ENCODE measurements at regions of chr16 and their contacts with region 1.

Region 1: DNA sequence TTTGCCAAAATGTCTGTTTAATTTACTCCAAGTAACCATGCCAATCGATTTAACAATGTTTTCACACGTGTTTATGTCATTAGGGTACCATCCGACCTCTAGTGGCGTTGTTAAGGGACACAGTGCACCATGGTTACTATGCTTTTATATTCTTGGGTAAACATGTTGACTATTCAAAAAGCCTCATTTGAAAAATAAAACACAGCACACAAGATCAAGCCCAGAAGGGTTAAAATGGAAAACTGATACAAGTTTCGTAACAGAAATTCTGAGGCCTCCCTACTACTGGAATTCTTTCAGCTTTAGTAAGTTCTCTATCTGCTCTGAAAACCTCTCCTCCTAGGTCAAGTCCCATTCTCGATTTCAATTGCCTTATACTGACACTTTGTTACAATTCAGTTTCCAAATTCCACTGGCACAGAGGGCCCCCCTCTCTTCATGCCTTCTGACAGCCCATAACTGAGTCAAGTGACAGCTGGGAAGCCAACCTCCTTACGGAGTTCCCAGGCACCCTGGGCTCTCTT is 2.1 kb downstream of the CFAP20 start:
- DNase-seq: peak; percentile 80 to 94 (median 91)
- H3K4me3 ChIP-seq: peak overlapping the region in 5 of 7 experiments; percentile 81 to 98 (median 88)
- H3K27ac ChIP-seq: peak overlapping the region; percentile 77 to 87
- H3K4me1 ChIP-seq: peaks cover 18 to 45% (median 36%) of the 10 kb centered on the region in 4 experiments
- H3K27me3 ChIP-seq: no peaks in the 10 kb centered on the region

Region 2: DNA sequence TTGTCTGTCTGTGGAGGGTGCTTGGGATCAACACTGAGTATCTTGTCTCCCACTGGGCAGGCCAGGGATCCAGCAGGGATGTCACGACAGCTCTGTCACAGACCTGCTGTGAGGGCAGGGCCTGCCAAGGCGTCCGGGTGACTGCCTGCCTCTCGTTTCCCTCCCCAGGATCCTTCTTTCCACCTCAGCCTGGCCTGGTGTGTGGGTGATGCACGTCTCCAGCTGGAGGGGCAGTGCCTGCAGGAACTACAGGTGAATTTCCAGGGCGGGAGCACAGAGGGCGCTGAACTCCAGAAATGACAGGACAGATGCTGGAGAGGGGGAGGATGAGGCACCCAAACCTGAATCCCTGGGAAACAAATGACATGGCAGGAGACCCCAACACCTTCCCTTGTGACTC is 108.3 kb before region 1 on chr16:
- CTCF ChIA-PET with region 1: interaction called, 45 read pairs
- POLR2A ChIA-PET with region 1: no interaction called
- DNase-seq: no peak
- H3K4me3 ChIP-seq: no peak overlapping the region
- H3K27ac ChIP-seq: no peak overlapping the region
- H3K4me1 ChIP-seq: peaks cover 0 to 8% (median 3%) of the 10 kb centered on the region in 4 experiments
- H3K27me3 ChIP-seq: peaks cover 0 to 4% (median 0%) of the 10 kb centered on the region in 5 experiments

Region 3: GRCh38 chr16:58025351-58026138 is 101.5 kb before region 1 on chr16 and contains the start of gene MMP15:
- CTCF ChIA-PET with region 1: interaction called, 40 read pairs
- POLR2A ChIA-PET with region 1: interaction called, 3 read pairs
- DNase-seq: peak; percentile 38 to 62 (median 49)
- H3K4me3 ChIP-seq: peak within 1 kb of the TSS; percentile 47 to 80 (median 71)
- H3K27ac ChIP-seq: no peak within 1 kb of the TSS
- H3K4me1 ChIP-seq: peaks cover 0 to 43% (median 34%) of the 10 kb centered on the region in 4 experiments
- H3K27me3 ChIP-seq: peaks cover 0 to 41% (median 12%) of the 10 kb centered on the region in 5 experiments

Region 4: DNA sequence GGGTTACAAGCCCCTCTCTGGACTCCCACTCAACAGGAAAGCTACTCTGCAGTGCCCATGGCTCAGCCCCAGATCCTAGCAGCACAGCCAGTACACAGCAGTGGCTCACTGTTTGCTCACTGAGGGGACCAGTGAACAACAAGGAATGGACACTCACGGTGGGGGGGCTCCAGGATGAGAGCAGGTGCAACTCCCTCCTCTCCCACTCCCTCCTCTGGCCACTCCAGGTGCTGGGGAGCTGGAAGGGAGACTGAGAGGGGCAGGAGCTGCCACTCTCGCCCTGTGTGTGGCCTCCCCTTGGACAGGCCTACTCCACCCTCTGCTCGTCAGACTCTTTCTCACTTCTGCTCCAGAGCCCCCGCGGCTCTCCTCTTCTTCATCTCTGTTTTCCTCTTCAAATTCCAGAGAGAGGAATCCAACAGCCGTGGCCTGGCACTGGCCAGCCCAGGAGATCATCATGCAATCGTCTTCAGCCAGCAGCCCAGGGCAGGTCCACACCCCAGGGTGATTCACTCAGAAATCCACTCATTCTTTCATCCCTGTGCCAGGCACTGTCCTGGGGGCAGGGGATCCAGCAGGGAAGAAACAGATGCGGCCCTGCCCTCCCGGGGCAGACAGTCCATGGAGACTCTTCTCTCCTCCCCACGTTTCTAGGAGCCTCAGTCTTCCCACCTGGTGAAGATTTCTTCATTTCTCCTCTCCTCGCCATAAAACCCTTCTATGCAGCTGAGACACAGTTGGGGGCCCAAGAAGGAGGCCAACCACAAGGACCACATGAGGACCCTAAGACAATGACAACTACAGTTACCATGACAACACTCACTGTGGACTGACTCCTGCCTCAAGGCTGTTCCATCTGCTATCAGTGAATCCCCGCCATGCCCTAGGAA is 28.6 kb before region 1 on chr16:
- CTCF ChIA-PET with region 1: interaction called, 10 read pairs
- POLR2A ChIA-PET with region 1: interaction called, 4 read pairs
- DNase-seq: no peak
- H3K4me3 ChIP-seq: no peak overlapping the region
- H3K27ac ChIP-seq: no peak overlapping the region
- H3K4me1 ChIP-seq: peaks cover 0 to 13% (median 10%) of the 10 kb centered on the region in 4 experiments
- H3K27me3 ChIP-seq: no peaks in the 10 kb centered on the region